Prostate gland (tissue), 2 donors: ENCODE measurements at regions of chr3 and their contacts with region 1.

Region 1: GRCh38 chr3:58617338-58617761 is 40.2 kb upstream of the FAM107A start:
- DNase-seq: peak; percentile 77
- H3K4me3 ChIP-seq: no peak overlapping the region
- H3K27ac ChIP-seq: peak overlapping the region; percentile 76 to 85
- H3K4me1 ChIP-seq: no peaks in the 10 kb centered on the region
- H3K27me3 ChIP-seq: no peaks in the 10 kb centered on the region
- CTCF ChIP-seq: no peak
- POLR2A ChIP-seq: no peak

Region 2: GRCh38 chr3:58577269-58577821 is 40.0 kb before region 1 on chr3 and contains the start of gene FAM107A:
- intact Hi-C with region 1: loop called (anchors 2 kb)
- DNase-seq: peak; percentile 86
- H3K4me3 ChIP-seq: peak within 1 kb of the TSS; percentile 29
- H3K27ac ChIP-seq: peak within 1 kb of the TSS; percentile 74 to 81
- H3K4me1 ChIP-seq: peaks cover 9% of the 10 kb centered on the region
- H3K27me3 ChIP-seq: no peaks in the 10 kb centered on the region
- CTCF ChIP-seq: peak in 3 of 4 experiments; percentile 39 to 63 (median 57)
- POLR2A ChIP-seq: no peak
- total RNA-seq, gene FAM107A: 54.5 to 80.2 TPM

Region 3: DNA sequence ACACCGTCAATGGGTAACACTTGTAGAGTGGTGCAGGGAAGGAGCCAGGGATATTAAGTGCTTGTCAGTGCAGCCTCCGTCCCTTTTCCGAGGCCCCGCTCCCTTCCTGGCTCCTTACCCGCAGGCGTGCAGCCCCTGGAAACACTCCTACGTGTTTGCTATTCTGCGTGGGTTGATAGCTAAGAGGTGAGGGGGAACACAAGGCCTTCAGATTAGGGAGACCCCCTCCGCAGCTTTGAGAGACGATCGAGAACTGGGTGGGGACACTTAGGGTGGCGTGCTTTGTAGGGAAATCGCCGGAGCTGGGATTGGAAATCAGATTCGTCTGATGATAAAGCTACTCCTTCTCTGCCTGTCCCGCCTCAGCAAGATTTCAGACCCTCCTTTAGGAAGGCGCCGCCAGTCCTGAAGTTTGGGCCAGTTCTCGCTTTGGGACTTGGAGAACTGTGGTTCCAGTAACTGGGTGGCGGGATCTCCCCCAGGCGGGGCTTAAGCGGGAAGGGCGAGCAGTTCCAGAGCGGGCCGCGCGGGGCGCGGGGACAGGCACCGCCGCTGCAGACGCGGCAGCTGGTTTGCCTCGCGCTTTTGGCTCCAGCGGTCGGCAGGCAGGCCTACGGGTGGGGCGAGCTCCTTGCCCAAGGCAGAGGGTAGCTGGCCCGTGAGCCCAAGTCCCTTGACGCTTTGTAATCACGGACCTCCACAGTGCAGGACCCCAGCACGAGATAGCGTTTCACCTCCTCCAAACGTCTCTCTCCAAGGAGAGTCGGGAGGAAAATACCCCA is 32.2 kb before region 1 on chr3:
- intact Hi-C with region 1: loop called (anchors 2 kb)
- DNase-seq: peak; percentile 67
- H3K4me3 ChIP-seq: peak overlapping the region; percentile 31 to 32
- H3K27ac ChIP-seq: peak overlapping the region; percentile 59 to 77
- H3K4me1 ChIP-seq: peaks cover 5% of the 10 kb centered on the region
- H3K27me3 ChIP-seq: peaks cover 5% of the 10 kb centered on the region
- CTCF ChIP-seq: peak; percentile 3 to 88 (median 62)
- POLR2A ChIP-seq: no peak